ENCODE measurements at regions of chr12 and their contacts with region 1.

Region 1: GRCh38 chr12:76455582-76456345 is 103.8 kb downstream of the OSBPL8 start:
- DNase-seq: peak; percentile 52
- H3K4me3 Mint-ChIP-seq: no peak overlapping the region
- H3K27ac Mint-ChIP-seq: no peak overlapping the region
- H3K4me1 Mint-ChIP-seq: peaks cover 15% of the 10 kb centered on the region
- H3K27me3 Mint-ChIP-seq: no peaks in the 10 kb centered on the region

Region 2: GRCh38 chr12:74689071-74689655 is 1766.6 kb before region 1 on chr12:
- CTCF ChIA-PET with region 1: no interaction called
- intact Hi-C with region 1: loop called (anchors 10 kb)
- DNase-seq: no peak
- H3K4me3 Mint-ChIP-seq: no peak overlapping the region
- H3K27ac Mint-ChIP-seq: no peak overlapping the region
- H3K4me1 Mint-ChIP-seq: no peaks in the 10 kb centered on the region
- H3K27me3 Mint-ChIP-seq: peaks cover 8% of the 10 kb centered on the region

Region 3: DNA sequence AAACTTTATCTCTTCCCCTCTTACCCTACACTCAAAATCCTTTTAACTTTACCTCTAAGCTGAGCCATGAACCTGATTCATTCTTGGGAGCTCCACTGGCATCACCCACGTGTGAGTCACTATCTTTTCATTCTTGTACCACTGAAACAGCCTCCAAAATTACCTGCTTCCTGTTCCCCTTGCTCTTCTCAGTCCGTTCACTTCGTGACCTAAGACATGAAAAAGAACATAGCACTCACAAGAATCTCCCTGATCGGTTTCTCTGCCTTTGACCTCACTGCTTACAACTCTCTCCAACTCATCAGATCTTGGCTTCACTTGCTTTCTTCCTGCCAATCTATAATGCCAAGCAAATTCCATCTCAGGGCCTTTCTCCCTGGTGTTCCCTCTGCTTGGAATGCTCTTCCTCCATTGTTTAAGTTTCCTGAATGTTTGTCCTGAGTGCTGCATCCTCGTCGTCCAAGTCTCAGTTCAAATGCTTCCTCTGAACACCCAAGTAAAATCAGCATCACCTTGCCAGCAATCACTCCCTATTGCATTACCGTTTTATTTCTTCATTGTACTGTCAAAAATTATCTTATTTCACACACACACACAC is 966.1 kb before region 1 on chr12:
- CTCF ChIA-PET with region 1: no interaction called
- intact Hi-C with region 1: loop called (anchors 2 kb)
- DNase-seq: peak; percentile 62
- H3K4me3 Mint-ChIP-seq: no peak overlapping the region
- H3K27ac Mint-ChIP-seq: peak overlapping the region; percentile 25
- H3K4me1 Mint-ChIP-seq: peaks cover 19% of the 10 kb centered on the region
- H3K27me3 Mint-ChIP-seq: no peaks in the 10 kb centered on the region

Region 4: GRCh38 chr12:75526655-75527511 is 928.9 kb before region 1 on chr12:
- CTCF ChIA-PET with region 1: interaction called, 3 read pairs
- intact Hi-C with region 1: loop called (anchors 1 kb)
- DNase-seq: no peak
- H3K4me3 Mint-ChIP-seq: no peak overlapping the region
- H3K27ac Mint-ChIP-seq: no peak overlapping the region
- H3K4me1 Mint-ChIP-seq: peaks cover 3% of the 10 kb centered on the region
- H3K27me3 Mint-ChIP-seq: peaks cover 27% of the 10 kb centered on the region

Region 5: DNA sequence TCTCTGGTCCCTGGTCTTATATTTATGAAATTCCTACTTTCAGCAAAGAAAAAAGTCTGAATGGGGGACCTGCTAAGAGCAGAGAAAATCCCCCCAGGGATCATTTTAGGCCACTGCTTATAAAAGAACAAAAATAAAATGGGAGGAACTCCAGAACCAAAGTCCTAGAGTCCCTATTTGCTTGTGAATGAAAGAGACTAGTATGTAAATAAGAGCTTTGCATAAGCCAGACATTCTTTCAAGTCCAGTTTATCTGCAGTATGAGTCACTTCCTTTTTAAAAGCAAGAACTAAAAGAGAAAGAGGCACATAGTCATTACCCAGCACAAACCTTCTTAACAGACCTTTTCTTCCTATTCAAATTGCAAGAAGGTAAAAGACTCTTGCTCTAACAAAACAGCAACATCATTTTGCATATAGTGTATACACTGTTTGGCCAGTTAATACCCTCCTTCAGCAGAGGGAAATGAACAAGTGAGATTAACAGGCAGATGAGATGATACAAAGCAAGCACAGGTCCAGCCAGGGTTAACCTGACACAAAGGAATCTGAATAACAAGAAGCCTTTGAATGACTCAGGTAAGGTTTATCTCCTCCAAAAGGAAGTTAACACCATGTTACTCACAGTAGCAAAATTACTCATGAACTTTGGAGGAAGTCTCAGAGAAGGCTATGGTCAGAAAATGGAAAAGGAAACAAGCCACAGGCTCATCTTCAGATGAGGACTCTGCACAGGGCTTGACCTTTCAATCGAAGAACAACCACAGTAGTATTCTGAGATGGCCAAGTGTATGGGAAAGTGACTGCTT is 511.5 kb before region 1 on chr12:
- CTCF ChIA-PET with region 1: no interaction called
- intact Hi-C with region 1: loop called (anchors 1 kb)
- DNase-seq: peak; percentile 44
- H3K4me3 Mint-ChIP-seq: no peak overlapping the region
- H3K27ac Mint-ChIP-seq: peak overlapping the region; percentile 87
- H3K4me1 Mint-ChIP-seq: peaks cover 22% of the 10 kb centered on the region
- H3K27me3 Mint-ChIP-seq: no peaks in the 10 kb centered on the region

Region 6: GRCh38 chr12:76226397-76226796 is 229.4 kb before region 1 on chr12:
- CTCF ChIA-PET with region 1: no interaction called
- intact Hi-C with region 1: no loop called
- DNase-seq: no peak
- H3K4me3 Mint-ChIP-seq: no peak overlapping the region
- H3K27ac Mint-ChIP-seq: no peak overlapping the region
- H3K4me1 Mint-ChIP-seq: no peaks in the 10 kb centered on the region
- H3K27me3 Mint-ChIP-seq: peaks cover 4% of the 10 kb centered on the region

Region 7: DNA sequence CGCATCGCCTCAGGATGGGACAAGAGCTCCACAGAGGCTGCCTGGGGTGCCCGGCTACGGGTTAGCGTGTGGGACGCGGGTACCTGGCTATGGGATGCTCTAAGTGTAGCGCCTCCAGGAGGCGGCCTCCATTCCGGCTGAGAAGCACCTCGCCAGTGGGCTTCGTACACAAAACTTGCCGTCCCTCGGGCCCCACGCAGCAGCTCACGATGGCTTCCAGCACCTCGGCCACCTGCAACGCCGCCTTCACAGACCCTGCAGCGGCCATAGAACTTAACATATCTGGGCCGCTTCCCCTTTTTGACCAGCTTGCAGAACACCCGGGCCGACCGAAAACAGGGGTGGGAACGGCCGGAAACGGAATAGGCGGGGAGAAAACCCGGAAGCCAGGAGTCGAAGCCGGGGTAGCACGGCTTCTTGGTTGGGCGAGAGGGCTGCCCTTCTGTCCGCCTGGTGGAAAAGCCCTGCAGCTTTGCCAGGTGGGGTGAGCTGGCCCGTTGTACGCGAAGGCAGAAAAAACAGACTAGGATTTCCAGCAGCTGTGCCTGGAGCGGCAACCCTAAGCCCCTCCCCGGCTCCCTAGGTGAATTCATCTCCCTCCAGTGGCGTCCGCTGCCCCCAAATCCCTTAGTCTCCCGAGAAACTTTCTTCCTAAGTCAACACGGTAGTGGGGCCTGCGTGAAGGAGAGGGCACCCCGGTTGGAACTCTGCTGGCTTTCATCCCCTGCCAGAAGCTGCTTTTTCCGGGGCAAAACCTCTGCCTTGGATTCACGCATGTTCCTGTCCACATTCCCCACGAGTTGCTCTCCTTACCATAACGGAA is 107.5 kb before region 1 on chr12 and contains the start of gene BBS10:
- CTCF ChIA-PET with region 1: interaction called, 5 read pairs
- intact Hi-C with region 1: loop called (anchors 1 kb)
- DNase-seq: peak; percentile 92
- H3K4me3 Mint-ChIP-seq: peak within 1 kb of the TSS; percentile 90
- H3K27ac Mint-ChIP-seq: peak within 1 kb of the TSS; percentile 86
- H3K4me1 Mint-ChIP-seq: peaks cover 22% of the 10 kb centered on the region
- H3K27me3 Mint-ChIP-seq: no peaks in the 10 kb centered on the region
- total RNA-seq, gene BBS10: 3.3 TPM

Region 8: DNA sequence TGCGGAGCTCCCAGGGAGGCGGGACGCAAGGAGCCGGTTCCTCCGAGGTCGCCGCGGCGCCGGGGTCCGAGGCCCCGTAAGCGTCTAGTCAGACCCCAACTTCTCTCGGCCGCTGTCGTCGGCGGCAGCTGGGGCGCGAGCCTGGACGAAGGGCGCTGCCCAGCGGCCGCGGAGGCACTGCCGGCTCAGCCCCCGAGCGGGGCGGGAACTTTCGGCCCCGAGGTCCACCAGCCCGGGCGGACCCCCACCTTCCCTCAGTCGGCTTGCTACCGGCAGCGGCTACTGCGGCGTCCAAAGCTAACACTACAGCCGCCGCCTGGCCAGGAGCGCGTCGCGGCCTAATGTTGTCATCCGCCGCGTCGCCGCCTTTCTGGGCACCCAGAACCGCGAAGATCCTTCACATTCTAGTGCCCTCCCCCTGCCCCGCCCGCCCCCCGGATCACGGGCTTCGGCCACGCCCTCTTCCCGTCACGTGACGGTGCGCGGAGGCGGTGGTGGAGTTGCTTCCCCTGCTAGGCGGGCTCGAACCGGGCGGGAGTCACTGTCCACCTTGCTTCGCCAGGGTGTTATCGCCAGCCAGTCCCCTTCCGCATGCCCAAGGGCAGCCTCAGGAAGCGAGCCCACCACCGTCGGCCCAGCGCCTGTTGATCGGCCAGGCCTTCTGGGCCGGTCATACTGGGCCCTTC is 103.8 kb after region 1 on chr12 and contains the start of gene OSBPL8:
- CTCF ChIA-PET with region 1: no interaction called
- intact Hi-C with region 1: loop called (anchors 1 kb)
- DNase-seq: peak; percentile 96
- H3K4me3 Mint-ChIP-seq: peak within 1 kb of the TSS; percentile 92
- H3K27ac Mint-ChIP-seq: peak within 1 kb of the TSS; percentile 96
- H3K4me1 Mint-ChIP-seq: peaks cover 34% of the 10 kb centered on the region
- H3K27me3 Mint-ChIP-seq: no peaks in the 10 kb centered on the region
- total RNA-seq, gene OSBPL8: 56.8 to 63.7 TPM

Measured in activated naive CD4-positive, alpha-beta T cell treated with anti-CD3 and anti-CD28 coated beads for 36 hours (primary cell).